Posterior cingulate gyrus (tissue), 11 donors: ENCODE measurements at regions of chr6 and their contacts with region 1.

Region 1: DNA sequence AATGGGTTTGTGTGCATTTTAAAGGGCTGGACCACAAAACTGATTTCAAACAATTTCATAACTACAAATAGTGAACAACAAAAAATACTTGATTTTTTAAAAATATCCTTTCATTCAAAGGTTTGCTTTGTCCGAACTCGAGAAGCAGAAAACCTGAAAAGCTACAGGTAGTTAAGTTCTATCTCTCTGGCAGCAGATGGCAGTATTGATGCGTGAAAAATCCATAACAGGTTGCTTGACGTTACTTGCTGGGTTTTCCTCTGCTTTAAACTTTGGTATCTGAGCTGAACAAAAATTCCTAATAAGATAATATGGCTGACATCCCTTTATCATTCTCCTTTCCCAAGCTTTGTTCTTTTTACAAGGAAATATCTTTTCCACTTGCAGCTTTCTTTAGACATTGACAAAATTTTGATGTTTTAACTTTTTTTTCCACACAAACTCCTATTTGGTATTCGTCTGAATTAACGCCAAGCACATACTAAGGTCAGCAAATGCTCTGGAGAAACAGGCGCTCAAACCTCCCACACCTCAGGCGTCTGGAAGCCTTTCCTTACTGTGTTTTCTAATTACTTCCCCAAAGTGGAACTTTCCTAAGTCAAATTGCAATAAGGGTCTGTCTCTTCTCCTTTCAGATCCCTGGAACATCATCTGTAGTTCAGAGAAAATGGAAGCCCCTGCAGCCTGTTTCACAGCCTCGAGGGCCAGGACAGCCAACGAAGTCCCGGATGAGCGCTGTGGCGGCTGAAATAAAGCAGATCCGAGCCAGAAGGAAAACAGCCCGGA is 50.3 kb upstream of the GFRAL start:
- DNase-seq: peak in 1 of 10 donors; percentile 67

Region 2: GRCh38 chr6:55925292-55925691 is 648.4 kb after region 1 on chr6:
- intact Hi-C with region 1: no loop called
- DNase-seq: no peak

Region 3: DNA sequence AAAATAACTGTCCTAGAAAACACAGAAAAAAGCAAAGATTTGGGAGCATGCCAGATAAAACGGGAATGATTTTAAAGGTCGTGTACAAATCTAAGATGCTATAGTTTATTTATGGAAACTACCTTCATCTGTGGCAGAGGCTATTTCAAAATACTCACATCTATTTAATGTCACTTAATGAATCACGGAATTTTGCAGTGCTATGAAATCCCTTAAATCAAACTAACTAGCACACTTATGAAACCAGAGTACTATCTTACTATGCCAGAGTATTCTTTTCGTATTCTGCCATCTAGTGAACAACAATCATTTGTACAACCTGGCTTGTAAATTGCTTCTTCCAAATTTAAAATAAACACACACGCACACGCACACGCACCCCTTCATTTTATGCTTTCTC is 676.4 kb after region 1 on chr6:
- intact Hi-C with region 1: loop called (anchors 10 kb)
- DNase-seq: no peak